Endothelial cell of umbilical vein (primary cell): ENCODE measurements at regions of chr2 and their contacts with region 1.

Region 1: DNA sequence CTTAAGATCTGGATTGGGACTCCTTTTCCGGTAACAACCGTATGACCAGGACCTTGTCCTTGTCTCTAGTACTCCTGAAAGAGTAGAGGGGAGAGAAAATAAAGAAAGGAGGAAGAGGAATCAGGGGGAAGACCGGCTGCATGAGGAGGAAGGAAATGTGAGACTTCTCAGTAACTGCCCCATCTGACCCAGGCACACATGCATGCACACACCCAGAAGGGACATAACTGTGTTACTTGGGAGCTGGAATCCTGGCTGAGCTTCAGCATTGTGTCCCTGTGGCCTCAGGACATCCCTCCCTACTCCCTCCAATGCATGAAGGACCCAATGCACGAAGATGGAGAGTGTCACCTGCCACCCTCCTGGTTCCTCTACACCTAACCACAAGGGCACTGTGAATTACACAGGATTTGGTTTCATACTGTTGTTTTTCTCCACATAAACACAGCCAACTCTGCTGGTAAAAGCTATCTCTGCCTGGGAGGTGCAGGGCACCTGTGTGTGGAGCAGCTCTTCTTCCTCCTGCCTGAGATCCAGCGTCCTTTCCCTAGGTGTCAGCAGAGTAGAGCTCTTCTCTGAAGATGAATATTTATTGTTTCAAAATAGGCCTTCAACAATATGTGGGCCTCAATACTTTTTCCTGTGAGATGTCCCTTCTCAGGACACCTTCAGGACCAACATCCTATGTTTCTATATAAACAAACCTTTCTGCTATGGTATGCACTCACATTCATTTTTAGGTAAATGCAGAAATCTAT is 574.1 kb upstream of the ID2 start:
- DNase-seq: no peak
- H3K4me3 ChIP-seq: no peak overlapping the region
- H3K27ac ChIP-seq: no peak overlapping the region
- H3K4me1 ChIP-seq: no peaks in the 10 kb centered on the region
- H3K27me3 ChIP-seq: no peaks in the 10 kb centered on the region
- CTCF ChIP-seq: no peak
- POLR2A ChIP-seq: no peak

Region 2: DNA sequence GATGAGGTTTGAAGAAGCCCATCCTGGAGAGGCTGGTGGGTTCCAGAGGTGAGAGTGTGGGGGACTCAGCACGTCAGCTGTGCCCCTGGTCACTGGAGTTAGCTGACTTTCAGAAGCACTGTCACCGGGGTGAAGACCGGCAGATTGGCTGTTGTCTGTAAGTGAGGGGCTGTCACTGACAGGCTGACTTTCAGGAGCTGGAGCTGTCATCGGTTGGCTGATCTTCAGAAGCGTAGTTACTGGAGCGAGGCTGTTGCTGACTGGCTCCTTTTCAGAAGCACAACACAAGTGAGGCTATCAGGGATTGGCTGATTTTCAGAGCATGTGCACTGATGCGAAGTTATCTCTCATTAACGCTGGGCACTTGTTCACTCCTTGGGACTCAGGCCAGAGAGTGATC is 164.4 kb before region 1 on chr2:
- CTCF ChIA-PET with region 1: no interaction called
- POLR2A ChIA-PET with region 1: no interaction called
- dilution Hi-C with region 1: no loop called
- intact Hi-C with region 1: no loop called
- DNase-seq: no peak
- H3K4me3 ChIP-seq: no peak overlapping the region
- H3K27ac ChIP-seq: no peak overlapping the region
- H3K4me1 ChIP-seq: no peaks in the 10 kb centered on the region
- H3K27me3 ChIP-seq: no peaks in the 10 kb centered on the region
- CTCF ChIP-seq: no peak
- POLR2A ChIP-seq: no peak

Region 3: GRCh38 chr2:8189316-8189715 is 81.5 kb after region 1 on chr2:
- CTCF ChIA-PET with region 1: no interaction called
- POLR2A ChIA-PET with region 1: no interaction called
- dilution Hi-C with region 1: no loop called
- intact Hi-C with region 1: loop called (anchors 5 kb)
- DNase-seq: no peak
- H3K4me3 ChIP-seq: no peak overlapping the region
- H3K27ac ChIP-seq: no peak overlapping the region
- H3K4me1 ChIP-seq: no peaks in the 10 kb centered on the region
- H3K27me3 ChIP-seq: no peaks in the 10 kb centered on the region
- CTCF ChIP-seq: no peak
- POLR2A ChIP-seq: no peak